Ascending aorta (tissue), 2 donors: ENCODE measurements at regions of chr3 and their contacts with region 1.

Region 1: DNA sequence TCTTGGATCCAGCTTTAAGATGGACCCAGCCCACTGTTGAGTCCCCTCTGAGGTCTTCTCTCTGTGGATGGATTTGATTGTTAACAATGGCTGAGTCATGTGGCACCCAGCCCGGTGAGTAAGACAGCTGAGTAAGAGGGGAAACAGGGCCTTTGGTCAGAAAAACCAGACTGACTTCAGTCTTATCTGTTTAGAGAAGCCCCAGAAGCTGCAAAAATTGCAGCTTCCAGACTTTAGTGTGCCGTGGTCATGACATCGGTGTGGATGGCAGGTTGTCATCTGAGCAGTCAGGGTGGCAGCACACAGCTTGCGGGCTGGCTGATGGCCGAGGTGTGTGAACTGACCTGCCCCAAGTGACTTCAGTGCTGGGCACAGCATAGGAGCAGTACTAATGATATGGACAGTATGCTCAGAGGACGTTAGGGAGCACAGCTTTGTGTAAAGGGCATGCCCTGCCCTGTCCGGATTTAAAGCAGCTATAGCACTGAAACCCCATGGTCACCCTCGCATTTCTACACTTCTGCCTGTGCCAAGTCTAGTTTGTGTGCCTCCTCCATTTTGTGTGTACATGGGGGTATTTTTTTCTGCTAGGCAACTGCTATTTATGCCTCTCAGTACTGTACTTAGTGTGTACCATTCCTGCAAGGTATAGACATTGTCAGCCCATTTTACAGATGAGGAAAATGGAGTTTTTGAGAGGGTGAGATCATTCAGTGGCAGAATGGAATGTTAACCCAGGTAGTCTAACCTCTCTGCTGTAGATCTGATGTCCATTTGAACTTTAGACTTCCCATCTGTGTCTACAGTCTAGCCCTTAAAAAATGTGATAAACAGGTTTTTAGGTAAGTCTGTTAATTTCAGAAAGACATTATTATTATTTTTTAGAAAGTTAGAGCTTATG is 44.4 kb downstream of the FLNB start:
- DNase-seq: peak; percentile 79 to 96
- H3K4me3 ChIP-seq: no peak overlapping the region
- H3K27ac ChIP-seq: peak overlapping the region; percentile 72 to 82
- H3K4me1 ChIP-seq: peaks cover 19 to 48% of the 10 kb centered on the region in 2 donors
- H3K27me3 ChIP-seq: no peaks in the 10 kb centered on the region
- CTCF ChIP-seq: no peak

Region 2: GRCh38 chr3:57896031-57896430 is 156.6 kb before region 1 on chr3:
- intact Hi-C with region 1: loop called (anchors 5 kb)
- DNase-seq: no peak
- H3K4me3 ChIP-seq: peak overlapping the region; percentile 41 to 56
- H3K27ac ChIP-seq: peak overlapping the region; percentile 85 to 87
- H3K4me1 ChIP-seq: peaks cover 12 to 19% of the 10 kb centered on the region in 2 donors
- H3K27me3 ChIP-seq: no peaks in the 10 kb centered on the region
- CTCF ChIP-seq: no peak

Region 3: DNA sequence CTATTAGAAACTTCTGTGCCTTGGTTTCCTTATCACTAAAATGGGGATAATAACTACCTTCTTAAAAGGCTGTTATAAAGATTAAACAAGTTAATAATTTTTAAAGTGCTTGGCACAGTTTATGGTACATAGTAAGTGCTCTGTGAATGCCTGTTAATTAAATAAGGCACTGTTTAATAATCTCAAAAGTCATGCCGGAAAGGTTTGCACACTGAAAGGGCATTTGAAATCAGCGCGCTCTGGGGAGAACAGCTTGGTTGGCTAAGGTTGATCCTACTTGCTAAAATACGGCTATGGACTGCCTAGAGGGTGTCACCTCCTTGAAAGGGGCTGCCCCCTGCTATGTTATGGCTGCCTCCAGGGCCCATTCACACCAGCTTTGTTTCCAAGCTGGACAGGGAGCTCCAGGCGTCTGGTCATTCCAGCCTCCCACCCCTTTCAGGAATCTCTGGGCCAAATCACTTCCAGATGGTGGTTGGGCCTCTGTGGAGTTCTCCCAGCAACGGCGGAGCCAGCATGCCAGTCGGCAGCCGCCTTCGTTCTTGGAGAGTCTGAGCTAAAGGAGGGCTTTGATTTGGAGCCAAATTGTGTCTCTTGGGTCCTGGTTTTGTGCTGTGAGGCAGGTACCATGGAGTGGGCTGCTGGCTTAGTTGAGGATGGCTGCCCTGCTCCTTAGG is 38.5 kb before region 1 on chr3:
- intact Hi-C with region 1: loop called (anchors 5 kb)
- DNase-seq: peak in 1 of 2 donors; percentile 89
- H3K4me3 ChIP-seq: peak overlapping the region; percentile 20 to 28
- H3K27ac ChIP-seq: peak overlapping the region; percentile 80 to 87
- H3K4me1 ChIP-seq: peaks cover 8 to 57% of the 10 kb centered on the region in 2 donors
- H3K27me3 ChIP-seq: no peaks in the 10 kb centered on the region
- CTCF ChIP-seq: no peak

Region 4: GRCh38 chr3:58366699-58367098 is 314.1 kb after region 1 on chr3:
- intact Hi-C with region 1: no loop called
- DNase-seq: no peak
- H3K4me3 ChIP-seq: no peak overlapping the region
- H3K27ac ChIP-seq: no peak overlapping the region
- H3K4me1 ChIP-seq: no peaks in the 10 kb centered on the region
- H3K27me3 ChIP-seq: no peaks in the 10 kb centered on the region
- CTCF ChIP-seq: no peak

Region 5: GRCh38 chr3:58392181-58392580 is 339.6 kb after region 1 on chr3:
- intact Hi-C with region 1: no loop called
- DNase-seq: no peak
- H3K4me3 ChIP-seq: no peak overlapping the region
- H3K27ac ChIP-seq: peak overlapping the region in 1 of 2 donors; percentile 41
- H3K4me1 ChIP-seq: peaks cover 0 to 4% of the 10 kb centered on the region in 2 donors
- H3K27me3 ChIP-seq: no peaks in the 10 kb centered on the region
- CTCF ChIP-seq: no peak